Astrocyte of the cerebellum (primary cell): ENCODE measurements at regions of chr11 and their contacts with region 1.

Region 1: DNA sequence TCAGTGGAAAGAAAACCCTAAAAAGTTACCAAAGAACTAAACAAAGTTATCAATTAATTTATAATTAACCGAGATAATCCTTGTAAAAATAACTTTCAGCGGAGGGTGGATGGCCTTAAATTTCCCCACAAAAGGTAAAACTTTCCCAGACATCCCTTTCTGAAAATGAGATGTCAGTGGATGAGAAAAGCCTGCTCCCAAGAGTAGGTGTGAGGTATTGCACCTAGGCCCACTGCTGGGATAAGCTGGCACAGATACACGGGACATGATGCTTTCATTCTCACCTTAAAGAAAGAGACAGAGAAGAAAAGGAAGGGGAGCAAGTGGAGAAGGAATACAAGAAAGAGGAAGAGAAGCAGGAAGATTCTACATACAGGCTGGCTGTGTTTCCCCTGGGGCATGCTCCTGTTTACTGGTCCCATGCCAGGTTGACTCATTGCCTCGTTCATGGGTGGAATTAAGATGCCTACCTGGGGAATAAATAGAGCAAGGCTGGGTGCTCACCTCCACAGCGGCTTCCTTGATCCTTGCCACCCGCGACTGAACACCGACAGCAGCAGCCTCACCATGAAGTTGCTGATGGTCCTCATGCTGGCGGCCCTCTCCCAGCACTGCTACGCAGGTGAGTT is at the start of gene SCGB2A2:
- DNase-seq: no peak
- H3K4me3 ChIP-seq: no peak within 1 kb of the TSS
- CTCF ChIP-seq: peak; percentile 3

Region 2: DNA sequence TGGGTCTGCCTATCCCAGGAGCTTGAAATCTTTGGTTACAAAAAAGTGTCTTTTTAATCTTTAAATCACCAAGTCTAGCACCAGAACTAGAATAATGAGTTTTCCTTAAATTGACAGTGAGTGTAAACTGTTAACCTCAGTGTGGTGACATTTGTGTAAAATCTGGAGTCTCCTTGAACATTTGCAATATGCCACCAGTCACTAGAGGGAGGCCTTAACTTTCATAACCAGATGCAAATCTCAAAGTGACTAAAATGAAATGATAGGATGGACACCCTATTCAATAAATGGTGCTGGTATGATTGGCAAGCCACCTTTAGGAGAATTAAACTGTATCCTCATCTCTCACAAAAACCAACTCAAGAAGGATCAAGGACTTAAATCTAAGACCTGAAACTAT is 36.0 kb before region 1 on chr11:
- in situ Hi-C with region 1: no loop called
- DNase-seq: no peak
- H3K4me3 ChIP-seq: no peak overlapping the region
- CTCF ChIP-seq: no peak

Region 3: DNA sequence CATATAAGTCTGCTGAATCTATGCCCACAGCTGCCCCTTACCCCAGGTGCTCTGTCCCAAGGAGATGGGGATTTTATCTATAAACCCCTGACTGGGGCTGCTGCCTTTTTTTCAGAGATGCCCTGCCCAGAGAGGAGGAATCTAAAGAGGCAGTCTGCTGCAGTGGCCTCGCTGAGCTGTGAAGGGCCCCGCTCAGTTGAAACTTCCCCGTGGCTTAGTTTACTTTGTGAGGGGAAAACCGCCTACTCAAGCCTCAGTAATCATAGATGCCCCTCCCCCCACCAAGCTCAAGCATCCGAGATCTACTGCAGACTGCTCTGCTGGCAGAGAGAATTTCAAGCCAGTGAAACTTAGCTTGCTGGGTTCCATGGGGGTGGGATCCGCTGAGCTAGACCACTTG is 36.5 kb after region 1 on chr11:
- in situ Hi-C with region 1: no loop called
- DNase-seq: no peak
- H3K4me3 ChIP-seq: no peak overlapping the region
- CTCF ChIP-seq: no peak

Region 4: DNA sequence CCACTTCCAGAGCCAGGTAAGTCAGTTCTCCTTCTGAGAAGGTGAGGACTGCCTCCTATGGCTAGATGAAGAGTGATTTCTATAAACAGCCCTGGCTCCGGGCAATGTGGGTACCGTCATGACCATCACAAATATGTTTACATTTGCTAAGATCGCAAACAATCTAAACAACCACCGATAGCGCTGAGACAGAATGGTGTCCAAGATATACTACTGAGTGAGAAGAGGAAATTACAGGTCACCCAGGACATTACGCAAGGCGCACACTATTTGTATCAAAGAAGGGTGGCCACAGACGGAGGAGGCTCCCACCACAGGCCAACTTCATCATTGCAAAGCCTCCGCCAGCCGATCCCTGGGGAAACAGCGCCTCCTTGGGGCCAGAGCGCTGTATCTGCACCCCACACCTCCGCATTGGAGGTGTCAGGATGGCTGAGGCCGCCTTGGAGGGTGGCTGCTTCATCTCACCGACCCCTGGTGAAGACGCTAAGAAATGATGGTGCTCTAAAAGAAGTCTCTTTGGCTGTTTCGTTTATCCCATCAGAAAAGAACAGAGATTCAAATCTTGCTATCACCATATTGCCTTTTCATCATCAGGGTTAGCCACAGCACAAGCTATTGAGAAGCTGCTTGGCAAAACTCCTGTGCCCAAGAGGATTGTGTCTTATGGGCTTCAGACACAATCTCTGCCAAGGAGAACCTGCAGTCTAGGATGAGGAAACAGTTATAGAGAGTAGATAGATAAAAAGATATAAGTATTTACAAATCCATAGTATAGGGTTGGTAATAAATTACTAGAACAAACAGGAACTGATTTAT is 55.2 kb after region 1 on chr11:
- in situ Hi-C with region 1: loop called (anchors 5 kb)
- DNase-seq: no peak
- H3K4me3 ChIP-seq: no peak overlapping the region
- CTCF ChIP-seq: peak; percentile 41

Region 5: GRCh38 chr11:62353844-62354243 is 84.1 kb after region 1 on chr11:
- in situ Hi-C with region 1: no loop called
- DNase-seq: no peak
- H3K4me3 ChIP-seq: no peak overlapping the region
- CTCF ChIP-seq: no peak

Region 6: GRCh38 chr11:62383822-62384221 is 114.1 kb after region 1 on chr11:
- in situ Hi-C with region 1: no loop called
- DNase-seq: no peak
- H3K4me3 ChIP-seq: no peak overlapping the region
- CTCF ChIP-seq: no peak